ENCODE measurements at regions of chr9 and their contacts with region 1.

Region 1: GRCh38 chr9:92764988-92765936 is 629 bp upstream of the BICD2 start:
- DNase-seq: peak; percentile 96 to 100 (median 99)

Region 2: GRCh38 chr9:92115071-92115858 is 650.0 kb before region 1 on chr9 and contains the start of gene SPTLC1:
- intact Hi-C with region 1: loop called (anchors 10 kb)
- DNase-seq: peak; percentile 92 to 99 (median 95)

Region 3: DNA sequence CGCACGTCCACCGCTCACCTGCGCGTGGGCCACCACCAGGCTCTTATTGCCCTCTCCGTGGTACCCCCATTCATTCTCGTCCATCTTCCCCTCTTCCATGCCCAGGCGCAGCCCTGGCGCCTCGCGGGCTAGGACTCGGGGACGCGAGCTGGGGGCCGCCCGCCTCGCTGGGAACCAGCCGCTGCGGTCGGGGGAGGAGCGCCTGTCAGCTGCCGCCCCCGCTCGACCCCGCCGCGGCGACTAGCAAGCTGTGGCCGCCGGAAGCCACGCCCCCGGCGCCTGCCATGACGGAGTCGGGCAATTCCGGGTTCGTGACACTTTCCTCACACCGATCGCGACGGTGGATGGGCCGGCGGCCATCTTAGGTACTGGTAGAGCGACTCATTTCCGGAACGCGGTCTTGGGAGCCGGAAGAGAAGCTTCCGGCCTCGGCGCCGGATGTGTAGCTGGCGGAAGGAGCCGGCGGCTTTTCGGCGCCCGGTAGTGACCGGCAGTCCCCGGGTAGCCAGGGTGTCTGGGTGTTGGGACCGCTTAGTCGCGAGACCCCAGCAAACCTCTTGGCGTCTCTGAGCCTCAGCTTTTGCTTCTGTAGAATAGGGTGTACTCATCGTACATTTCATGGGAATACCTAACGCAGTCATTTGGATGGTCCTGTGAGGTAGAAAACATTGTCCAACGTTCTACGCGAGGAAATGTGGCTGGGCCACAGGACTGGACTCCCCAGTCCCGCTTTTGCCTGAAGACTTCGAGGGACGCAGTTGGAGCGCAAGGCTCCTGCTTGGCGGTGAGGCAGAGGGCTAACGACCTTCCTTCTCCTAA is 95.2 kb before region 1 on chr9 and contains the start of gene IPPK:
- intact Hi-C with region 1: loop called (anchors 1 kb)
- DNase-seq: peak; percentile 96 to 100 (median 98)

Region 4: GRCh38 chr9:92728831-92729734 is 36.2 kb before region 1 on chr9:
- intact Hi-C with region 1: loop called (anchors 5 kb)
- DNase-seq: peak in 9 of 10 donors; percentile 36 to 94 (median 68)

Region 5: GRCh38 chr9:92790542-92791527 is 25.6 kb after region 1 on chr9:
- intact Hi-C with region 1: loop called (anchors 2 kb)
- DNase-seq: peak; percentile 50 to 94 (median 80)